ENCODE measurements at regions of chr10 and their contacts with region 1.

Region 1: GRCh38 chr10:3467052-3467951 is 294.7 kb upstream of the PITRM1 start:
- DNase-seq: peak; percentile 99
- H3K4me3 ChIP-seq: peak overlapping the region in 1 of 3 experiments; percentile 45
- H3K27ac ChIP-seq: peak overlapping the region; percentile 100
- H3K4me1 ChIP-seq: peaks cover 44% of the 10 kb centered on the region
- H3K27me3 ChIP-seq: no peaks in the 10 kb centered on the region
- CTCF ChIP-seq: peak; percentile 63 to 71
- POLR2A ChIP-seq: peak; percentile 18

Region 2: DNA sequence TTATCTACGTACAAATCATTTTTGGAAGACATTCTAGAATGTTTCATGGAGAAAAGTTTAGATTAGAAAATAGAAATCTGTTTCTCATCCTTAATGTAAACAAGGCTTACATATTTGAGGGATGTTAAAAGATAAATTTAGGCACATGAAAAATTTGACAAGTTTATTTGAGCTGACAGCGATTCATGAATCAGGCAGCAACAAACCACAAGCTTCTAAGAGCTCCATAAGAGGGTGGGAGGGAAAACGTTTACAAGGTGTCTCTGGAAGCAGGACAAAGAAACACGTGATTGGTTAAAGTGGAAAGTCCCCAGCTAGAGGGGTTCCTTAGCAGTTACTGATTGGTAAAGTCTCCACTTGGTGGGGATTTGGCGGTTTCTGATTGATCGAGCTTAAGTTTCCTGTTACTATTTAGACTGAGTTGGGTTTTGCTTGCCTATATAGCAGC is 65.8 kb before region 1 on chr10:
- CTCF ChIA-PET with region 1: no interaction called
- POLR2A ChIA-PET with region 1: no interaction called
- dilution Hi-C with region 1: no loop called
- intact Hi-C with region 1: loop called (anchors 1 kb)
- DNase-seq: no peak
- H3K4me3 ChIP-seq: no peak overlapping the region
- H3K27ac ChIP-seq: no peak overlapping the region
- H3K4me1 ChIP-seq: peaks cover 24% of the 10 kb centered on the region
- H3K27me3 ChIP-seq: no peaks in the 10 kb centered on the region
- CTCF ChIP-seq: no peak
- POLR2A ChIP-seq: no peak

Region 3: DNA sequence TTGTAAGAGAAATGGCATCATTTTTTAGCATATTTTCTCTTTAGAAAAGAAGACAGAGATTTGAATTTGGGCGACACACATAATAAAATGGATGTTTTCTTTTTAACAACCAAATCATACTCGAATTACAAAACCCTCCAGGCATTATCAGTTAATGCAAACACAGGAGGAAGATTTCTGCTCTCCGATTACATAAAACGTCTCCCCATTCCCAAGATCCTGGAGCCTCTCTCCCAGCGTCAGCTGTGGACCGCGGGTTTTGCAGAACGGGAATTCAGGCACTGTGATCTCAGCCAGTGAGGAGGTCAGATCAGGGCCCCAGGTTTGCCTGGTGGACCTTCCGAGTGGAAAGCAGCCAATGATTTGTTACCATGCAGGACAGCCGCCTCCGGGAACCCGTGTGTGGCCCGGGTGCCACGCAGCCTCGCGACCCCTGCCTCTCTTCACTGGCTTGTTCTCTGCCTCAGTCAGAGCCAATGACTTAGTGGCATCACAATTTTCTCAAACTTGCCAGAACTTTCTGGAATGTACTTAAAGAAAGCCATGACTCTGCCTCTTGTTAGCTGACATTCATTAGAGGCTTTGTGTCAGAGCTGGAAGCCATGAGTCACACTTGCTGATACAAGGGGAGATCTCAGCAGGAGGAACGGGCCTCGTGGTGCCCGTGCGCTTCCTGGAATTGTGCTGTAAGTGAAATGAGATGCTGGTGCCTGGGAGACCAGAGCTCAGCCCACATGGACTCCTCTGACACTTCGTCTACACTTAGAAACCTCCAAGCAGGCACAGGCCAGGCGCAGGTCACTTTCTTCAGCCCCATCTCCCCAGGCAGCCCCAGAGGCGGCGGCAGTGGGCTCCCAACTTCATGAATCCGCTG is 71.6 kb after region 1 on chr10:
- CTCF ChIA-PET with region 1: interaction called, 3 read pairs
- POLR2A ChIA-PET with region 1: no interaction called
- dilution Hi-C with region 1: no loop called
- intact Hi-C with region 1: loop called (anchors 2 kb)
- DNase-seq: peak; percentile 97
- H3K4me3 ChIP-seq: no peak overlapping the region
- H3K27ac ChIP-seq: peak overlapping the region; percentile 87
- H3K4me1 ChIP-seq: peaks cover 25% of the 10 kb centered on the region
- H3K27me3 ChIP-seq: no peaks in the 10 kb centered on the region
- CTCF ChIP-seq: no peak
- POLR2A ChIP-seq: no peak

Region 4: GRCh38 chr10:3805791-3806461 is 338.6 kb after region 1 on chr10:
- CTCF ChIA-PET with region 1: no interaction called
- POLR2A ChIA-PET with region 1: no interaction called
- dilution Hi-C with region 1: no loop called
- intact Hi-C with region 1: loop called (anchors 1 kb)
- DNase-seq: peak; percentile 96
- H3K4me3 ChIP-seq: peak overlapping the region in 1 of 3 experiments; percentile 31
- H3K27ac ChIP-seq: peak overlapping the region; percentile 100
- H3K4me1 ChIP-seq: peaks cover 70% of the 10 kb centered on the region
- H3K27me3 ChIP-seq: no peaks in the 10 kb centered on the region
- CTCF ChIP-seq: no peak
- POLR2A ChIP-seq: peak; percentile 29

Region 5: DNA sequence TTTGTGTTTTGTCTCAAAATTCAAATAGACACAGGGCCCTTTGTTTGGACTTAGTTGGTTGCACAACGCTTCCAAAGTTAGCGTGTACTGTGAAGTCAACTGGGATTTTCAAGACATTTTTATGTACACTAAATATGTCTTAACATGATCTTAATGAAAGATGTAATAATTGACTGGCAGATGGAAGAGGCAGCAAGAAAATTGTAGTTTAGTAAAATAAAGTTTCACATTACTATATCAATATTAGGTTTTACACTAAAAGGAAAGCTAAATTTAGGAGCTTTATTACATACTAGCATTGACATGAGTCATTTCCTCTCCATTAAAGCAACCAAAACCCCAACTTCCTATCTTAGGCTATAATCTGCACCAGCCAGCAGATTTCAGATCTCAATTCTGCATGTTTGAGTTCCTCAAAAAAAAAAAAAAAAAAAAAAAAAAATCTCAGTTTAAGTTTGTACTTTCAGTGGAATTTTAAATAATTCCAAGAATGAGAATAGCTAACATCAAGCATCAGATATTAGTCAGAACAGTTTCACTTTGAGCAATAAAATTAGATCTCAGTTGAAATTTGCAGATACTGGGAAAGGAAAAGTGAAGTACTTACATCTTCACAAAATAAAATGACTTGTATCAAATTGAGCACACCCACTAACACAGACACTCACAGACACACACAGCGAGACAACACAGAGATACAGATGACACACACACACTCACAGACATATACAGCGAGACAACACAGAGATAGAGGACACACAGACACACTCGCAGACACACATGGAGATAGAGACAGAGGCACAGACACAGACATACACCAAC is 664.3 kb after region 1 on chr10:
- CTCF ChIA-PET with region 1: no interaction called
- POLR2A ChIA-PET with region 1: no interaction called
- dilution Hi-C with region 1: no loop called
- intact Hi-C with region 1: loop called (anchors 5 kb)
- DNase-seq: peak; percentile 86
- H3K4me3 ChIP-seq: peak overlapping the region in 1 of 3 experiments; percentile 47
- H3K27ac ChIP-seq: peak overlapping the region; percentile 92
- H3K4me1 ChIP-seq: peaks cover 48% of the 10 kb centered on the region
- H3K27me3 ChIP-seq: no peaks in the 10 kb centered on the region
- CTCF ChIP-seq: no peak
- POLR2A ChIP-seq: no peak

Region 6: DNA sequence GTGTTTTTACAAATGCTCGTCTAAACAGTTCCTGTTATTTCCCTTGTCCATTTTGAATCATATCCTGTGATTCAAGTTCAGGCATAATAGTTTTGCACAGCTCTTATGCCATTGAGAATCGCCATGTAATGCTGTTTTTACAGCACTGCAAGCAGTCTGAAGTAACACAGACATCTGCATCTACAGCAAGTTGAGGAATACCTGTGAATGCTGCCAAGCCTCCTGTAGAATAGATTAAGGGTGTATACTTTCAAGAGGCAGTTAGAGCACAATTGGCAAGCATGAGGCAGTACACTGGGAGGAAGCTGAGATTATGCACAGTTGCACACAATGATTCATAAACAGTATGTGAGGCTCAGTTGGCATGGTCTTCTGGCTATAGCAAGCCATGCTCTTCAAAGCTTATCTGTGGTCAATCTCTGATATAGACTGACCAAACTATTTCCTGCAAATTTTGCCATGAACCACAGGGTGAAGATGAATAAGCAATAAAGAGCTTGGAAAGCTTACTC is 1236.8 kb after region 1 on chr10:
- CTCF ChIA-PET with region 1: no interaction called
- POLR2A ChIA-PET with region 1: no interaction called
- dilution Hi-C with region 1: no loop called
- intact Hi-C with region 1: loop called (anchors 2 kb)
- DNase-seq: peak; percentile 98
- H3K4me3 ChIP-seq: no peak overlapping the region
- H3K27ac ChIP-seq: peak overlapping the region; percentile 92
- H3K4me1 ChIP-seq: peaks cover 45% of the 10 kb centered on the region
- H3K27me3 ChIP-seq: no peaks in the 10 kb centered on the region
- CTCF ChIP-seq: no peak
- POLR2A ChIP-seq: peak; percentile 13

Measured in endothelial cell of umbilical vein (primary cell).